CD4-positive, alpha-beta memory T cell (primary cell): ENCODE measurements at regions of chr12 and their contacts with region 1.

Region 1: DNA sequence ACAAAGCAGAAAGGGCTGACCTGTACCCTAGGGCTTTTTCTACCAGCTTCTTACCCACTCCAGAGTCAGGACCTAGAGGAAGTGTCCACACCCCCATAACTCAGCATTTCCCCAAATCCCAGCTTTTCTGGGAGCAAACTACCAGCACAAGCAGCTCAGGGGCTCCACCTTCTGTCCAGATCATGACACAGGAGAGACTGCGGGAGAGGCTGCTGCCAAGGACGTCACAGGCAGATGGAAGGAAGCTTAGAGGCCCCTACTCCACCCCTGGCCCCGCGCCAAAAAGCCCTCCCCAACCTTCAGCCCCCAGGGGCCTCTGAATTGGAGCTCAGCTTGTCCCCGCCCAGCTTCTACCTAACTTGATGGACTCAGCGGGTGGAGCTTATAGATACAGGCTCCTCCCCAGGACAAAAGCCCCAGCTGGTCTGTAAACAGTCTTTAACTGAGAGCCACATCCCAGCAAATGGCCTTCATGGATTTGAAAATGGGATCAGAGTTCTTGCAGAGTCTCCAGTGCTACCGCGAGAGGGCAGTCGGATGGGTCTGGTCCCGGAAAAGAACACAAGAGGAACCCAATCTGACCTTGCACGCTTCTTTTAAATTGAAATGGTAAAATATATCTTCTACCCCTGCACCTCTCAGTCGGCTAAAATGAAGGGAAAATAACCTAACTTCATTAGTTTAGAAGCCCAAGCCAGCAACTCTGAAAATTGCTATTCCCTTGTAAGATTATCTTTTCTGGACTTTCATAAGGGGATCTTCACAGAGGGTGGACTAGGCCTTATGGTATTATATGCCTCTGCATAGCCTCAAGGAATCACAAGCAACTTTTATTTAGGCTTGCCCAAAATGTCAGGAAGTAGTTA is 6.8 kb upstream of the BAZ2A start:
- DNase-seq: peak; percentile 93 to 99 (median 96)
- H3K4me3 ChIP-seq: peak overlapping the region; percentile 58 to 64
- H3K4me3 Mint-ChIP-seq: peak overlapping the region; percentile 86 to 99 (median 96)
- H3K27ac ChIP-seq: peak overlapping the region; percentile 81
- H3K27ac Mint-ChIP-seq: peak overlapping the region; percentile 82 to 99 (median 97)
- H3K4me1 ChIP-seq: peaks cover 44% of the 10 kb centered on the region
- H3K4me1 Mint-ChIP-seq: peaks cover 31 to 59% (median 46%) of the 10 kb centered on the region in 4 donors
- H3K27me3 ChIP-seq: no peaks in the 10 kb centered on the region
- H3K27me3 Mint-ChIP-seq: no peaks in the 10 kb centered on the region

Region 2: DNA sequence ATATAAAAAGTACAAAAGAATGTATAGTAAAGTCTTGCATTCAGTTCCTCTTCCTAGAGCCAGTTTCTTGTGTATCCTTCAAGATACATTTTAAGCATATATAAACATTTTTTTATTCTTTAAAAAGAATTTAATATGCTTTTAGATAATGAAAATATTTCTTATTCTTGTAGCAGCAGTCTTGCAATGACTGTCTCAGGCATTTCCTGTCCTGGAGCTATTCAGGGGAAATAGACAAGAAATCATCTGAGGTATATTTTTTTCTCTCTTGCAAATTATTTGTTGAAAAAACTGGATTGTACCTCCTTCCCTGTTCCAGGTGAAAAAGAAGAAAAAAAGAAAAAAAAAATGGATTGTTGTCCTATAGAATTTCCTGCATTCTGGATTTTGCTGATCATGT is 573.9 kb before region 1 on chr12:
- CTCF ChIA-PET with region 1: no interaction called
- POLR2A ChIA-PET with region 1: no interaction called
- intact Hi-C with region 1: no loop called
- DNase-seq: no peak
- H3K4me3 ChIP-seq: no peak overlapping the region
- H3K4me3 Mint-ChIP-seq: no peak overlapping the region
- H3K27ac ChIP-seq: no peak overlapping the region
- H3K27ac Mint-ChIP-seq: peak overlapping the region in 1 of 7 donors; percentile 37
- H3K4me1 ChIP-seq: no peaks in the 10 kb centered on the region
- H3K4me1 Mint-ChIP-seq: no peaks in the 10 kb centered on the region
- H3K27me3 ChIP-seq: no peaks in the 10 kb centered on the region
- H3K27me3 Mint-ChIP-seq: peaks cover 0 to 2% of the 10 kb centered on the region in 2 donors

Region 3: DNA sequence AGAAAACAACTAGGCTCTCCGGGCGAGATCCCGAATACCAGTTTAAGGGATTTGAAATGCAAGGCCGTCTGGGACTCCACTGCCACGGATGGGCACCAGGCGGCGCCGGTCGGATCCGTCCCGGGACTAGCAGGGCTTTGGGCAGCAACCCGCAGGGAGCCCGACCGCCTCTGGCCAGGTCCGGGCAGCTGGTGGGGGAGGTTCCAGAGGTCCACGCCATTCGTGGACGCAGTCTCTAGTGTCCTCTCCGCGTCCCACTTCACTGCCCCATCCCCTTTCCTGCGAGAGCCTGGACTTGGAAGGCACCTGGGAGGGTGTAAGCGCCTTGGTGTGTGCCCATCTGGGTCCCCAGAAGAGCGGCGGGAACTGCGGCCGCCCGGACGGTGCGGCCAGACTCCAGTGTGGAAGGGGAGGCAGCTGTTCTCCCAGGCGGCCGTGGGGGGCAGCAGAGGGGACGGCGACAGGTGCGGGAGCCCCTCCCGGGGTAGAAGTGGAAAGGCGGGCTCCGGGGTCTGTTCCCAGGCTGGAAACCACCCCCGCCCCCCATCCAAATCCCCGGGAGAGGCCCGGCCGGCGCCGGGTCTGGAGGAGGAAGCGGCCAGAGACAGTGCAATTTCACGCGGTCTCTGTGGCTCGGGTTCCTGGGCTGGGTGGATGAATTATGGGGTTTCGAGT is 557.8 kb before region 1 on chr12:
- CTCF ChIA-PET with region 1: no interaction called
- POLR2A ChIA-PET with region 1: no interaction called
- intact Hi-C with region 1: no loop called
- DNase-seq: peak; percentile 27 to 65 (median 40)
- H3K4me3 ChIP-seq: peak overlapping the region; percentile 52 to 86
- H3K4me3 Mint-ChIP-seq: peak overlapping the region; percentile 84 to 91 (median 88)
- H3K27ac ChIP-seq: peak overlapping the region; percentile 2
- H3K27ac Mint-ChIP-seq: peak overlapping the region in 6 of 7 donors; percentile 36 to 91 (median 72)
- H3K4me1 ChIP-seq: peaks cover 20% of the 10 kb centered on the region
- H3K4me1 Mint-ChIP-seq: peaks cover 0 to 25% (median 5%) of the 10 kb centered on the region in 4 donors
- H3K27me3 ChIP-seq: peaks cover 6% of the 10 kb centered on the region
- H3K27me3 Mint-ChIP-seq: peaks cover 0 to 3% of the 10 kb centered on the region in 2 donors

Region 4: GRCh38 chr12:56248688-56249087 is 388.2 kb before region 1 on chr12:
- CTCF ChIA-PET with region 1: no interaction called
- POLR2A ChIA-PET with region 1: no interaction called
- intact Hi-C with region 1: no loop called
- DNase-seq: no peak
- H3K4me3 ChIP-seq: no peak overlapping the region
- H3K4me3 Mint-ChIP-seq: no peak overlapping the region
- H3K27ac ChIP-seq: no peak overlapping the region
- H3K27ac Mint-ChIP-seq: no peak overlapping the region
- H3K4me1 ChIP-seq: no peaks in the 10 kb centered on the region
- H3K4me1 Mint-ChIP-seq: no peaks in the 10 kb centered on the region
- H3K27me3 ChIP-seq: no peaks in the 10 kb centered on the region
- H3K27me3 Mint-ChIP-seq: no peaks in the 10 kb centered on the region

Region 5: DNA sequence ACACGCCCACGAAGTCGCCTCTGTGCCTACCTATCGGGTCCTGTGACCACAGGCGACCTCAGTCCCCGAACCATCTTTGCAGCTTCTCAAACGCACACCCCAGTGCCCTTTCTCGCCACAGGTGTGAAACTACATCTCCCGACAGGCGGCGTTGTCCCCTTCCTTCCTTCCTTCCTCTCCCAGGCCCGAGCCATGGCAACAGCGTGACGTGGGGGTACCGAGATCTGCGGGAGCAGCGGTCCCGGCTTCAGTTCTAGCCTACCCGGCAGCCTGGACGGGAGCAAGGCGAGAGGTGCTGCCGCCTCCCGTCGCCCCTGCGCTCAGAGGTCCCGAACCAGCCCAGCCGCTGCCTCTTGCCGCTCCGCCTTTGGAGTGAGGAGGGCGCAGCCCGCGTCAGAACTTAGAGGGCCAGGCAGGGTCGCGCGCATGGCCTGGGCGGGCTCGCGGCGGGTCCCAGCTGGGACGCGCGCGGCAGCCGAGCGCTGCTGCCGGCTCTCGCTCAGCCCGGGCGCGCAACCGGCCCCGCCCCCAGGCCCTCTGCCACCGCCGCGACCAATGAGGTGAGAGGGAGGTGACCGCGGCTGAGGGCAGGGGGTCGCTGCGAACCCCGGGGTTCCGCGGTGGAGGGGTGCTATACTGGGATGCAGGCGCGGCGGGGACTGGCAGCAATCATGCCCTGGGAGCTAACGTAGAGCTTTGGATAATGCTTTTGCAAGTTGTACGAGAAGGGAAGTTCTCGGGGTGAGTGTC is 370.0 kb before region 1 on chr12 and contains the start of gene COQ10A:
- CTCF ChIA-PET with region 1: no interaction called
- POLR2A ChIA-PET with region 1: no interaction called
- intact Hi-C with region 1: no loop called
- DNase-seq: peak; percentile 89 to 96 (median 91)
- H3K4me3 ChIP-seq: peak within 1 kb of the TSS; percentile 27 to 90
- H3K4me3 Mint-ChIP-seq: peak within 1 kb of the TSS; percentile 89 to 99 (median 96)
- H3K27ac ChIP-seq: peak within 1 kb of the TSS; percentile 84
- H3K27ac Mint-ChIP-seq: peak within 1 kb of the TSS; percentile 90 to 99 (median 97)
- H3K4me1 ChIP-seq: peaks cover 14% of the 10 kb centered on the region
- H3K4me1 Mint-ChIP-seq: peaks cover 10 to 23% (median 16%) of the 10 kb centered on the region in 4 donors
- H3K27me3 ChIP-seq: no peaks in the 10 kb centered on the region
- H3K27me3 Mint-ChIP-seq: no peaks in the 10 kb centered on the region
- total RNA-seq, gene COQ10A: 35.3 to 38.6 TPM

Region 6: DNA sequence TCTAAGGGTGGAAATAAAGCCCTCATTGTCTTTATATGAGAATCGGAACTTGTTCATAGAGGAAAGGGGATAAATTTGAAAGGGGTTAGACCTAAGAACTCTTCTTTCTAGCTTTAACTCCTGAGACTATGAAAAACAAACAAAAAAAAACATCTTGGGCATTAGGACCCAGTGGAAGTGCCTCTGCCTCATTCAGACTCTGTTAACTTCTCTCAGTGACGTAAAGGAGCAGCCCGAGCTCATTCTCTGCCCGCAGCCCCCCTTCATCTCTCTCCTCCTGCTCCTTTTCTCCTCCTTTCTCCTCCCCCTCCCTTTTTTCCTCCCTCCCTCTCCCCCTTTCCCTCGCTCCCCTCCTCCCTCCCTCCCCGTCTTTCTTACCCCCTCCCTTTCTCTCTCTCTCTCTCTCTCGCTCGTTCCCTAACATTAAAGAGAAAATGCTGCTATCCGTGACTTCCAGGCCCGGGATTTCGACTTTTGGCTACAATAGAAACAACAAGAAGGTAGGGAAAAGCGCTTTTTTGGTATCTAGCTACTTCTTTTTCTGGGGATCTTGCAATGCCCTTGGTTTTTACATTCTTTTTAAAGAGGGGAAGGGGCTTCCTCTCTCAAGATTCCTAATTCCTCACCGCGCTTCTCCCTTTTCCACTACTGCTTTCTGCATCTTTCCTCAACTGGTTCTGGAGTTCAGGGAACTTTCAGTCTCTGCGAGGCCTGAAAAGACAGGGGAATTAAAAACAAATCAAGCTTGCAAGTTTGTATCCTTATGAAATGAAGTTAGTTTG is 115.1 kb before region 1 on chr12 and contains the start of gene RBMS2:
- CTCF ChIA-PET with region 1: interaction called, 17 read pairs
- POLR2A ChIA-PET with region 1: interaction called, 4 read pairs
- intact Hi-C with region 1: no loop called
- DNase-seq: peak; percentile 37 to 69 (median 49)
- H3K4me3 ChIP-seq: peak within 1 kb of the TSS in 1 of 2 donors; percentile 9
- H3K4me3 Mint-ChIP-seq: peak within 1 kb of the TSS; percentile 87 to 95 (median 89)
- H3K27ac ChIP-seq: peak within 1 kb of the TSS; percentile 18
- H3K27ac Mint-ChIP-seq: peak within 1 kb of the TSS; percentile 78 to 95 (median 90)
- H3K4me1 ChIP-seq: peaks cover 14% of the 10 kb centered on the region
- H3K4me1 Mint-ChIP-seq: peaks cover 14 to 28% (median 22%) of the 10 kb centered on the region in 4 donors
- H3K27me3 ChIP-seq: no peaks in the 10 kb centered on the region
- H3K27me3 Mint-ChIP-seq: peaks cover 0 to 3% of the 10 kb centered on the region in 2 donors
- total RNA-seq, gene RBMS2: 1.9 to 2.0 TPM

Region 7: DNA sequence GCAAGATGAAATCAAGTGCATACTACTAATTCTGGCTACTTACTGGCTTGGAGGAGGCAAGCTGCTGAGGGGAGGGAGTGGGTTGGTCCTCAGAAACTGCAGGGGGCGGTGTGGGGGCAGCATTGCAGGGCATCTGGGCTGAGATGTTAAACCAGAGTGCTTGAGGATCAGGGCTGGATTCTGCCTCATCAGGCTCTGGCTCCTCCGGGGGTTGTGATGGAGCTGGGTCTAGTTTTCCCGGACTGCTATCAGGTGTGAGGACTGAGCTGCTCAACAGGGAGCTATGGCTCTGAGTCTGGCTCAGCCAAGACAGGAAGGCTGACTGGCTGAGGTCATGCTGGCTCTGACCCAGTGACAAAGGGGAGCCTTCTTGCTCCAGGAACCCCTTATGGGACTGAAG is 35.4 kb before region 1 on chr12:
- CTCF ChIA-PET with region 1: interaction called, 38 read pairs
- POLR2A ChIA-PET with region 1: interaction called, 6 read pairs
- intact Hi-C with region 1: loop called (anchors 1 kb)
- DNase-seq: peak in 2 of 5 donors; percentile 16 to 24
- H3K4me3 ChIP-seq: no peak overlapping the region
- H3K4me3 Mint-ChIP-seq: no peak overlapping the region
- H3K27ac ChIP-seq: no peak overlapping the region
- H3K27ac Mint-ChIP-seq: peak overlapping the region in 1 of 7 donors; percentile 62
- H3K4me1 ChIP-seq: no peaks in the 10 kb centered on the region
- H3K4me1 Mint-ChIP-seq: no peaks in the 10 kb centered on the region
- H3K27me3 ChIP-seq: no peaks in the 10 kb centered on the region
- H3K27me3 Mint-ChIP-seq: no peaks in the 10 kb centered on the region

Region 8: GRCh38 chr12:56670836-56671235 is 33.9 kb after region 1 on chr12:
- CTCF ChIA-PET with region 1: interaction called, 11 read pairs
- POLR2A ChIA-PET with region 1: interaction called, 18 read pairs
- intact Hi-C with region 1: no loop called
- DNase-seq: no peak
- H3K4me3 ChIP-seq: no peak overlapping the region
- H3K4me3 Mint-ChIP-seq: no peak overlapping the region
- H3K27ac ChIP-seq: no peak overlapping the region
- H3K27ac Mint-ChIP-seq: peak overlapping the region in 1 of 7 donors; percentile 41
- H3K4me1 ChIP-seq: peaks cover 46% of the 10 kb centered on the region
- H3K4me1 Mint-ChIP-seq: peaks cover 18 to 52% (median 36%) of the 10 kb centered on the region in 4 donors
- H3K27me3 ChIP-seq: no peaks in the 10 kb centered on the region
- H3K27me3 Mint-ChIP-seq: no peaks in the 10 kb centered on the region

Region 9: GRCh38 chr12:56688129-56688845 is 51.4 kb after region 1 on chr12 and contains the start of gene PTGES3:
- CTCF ChIA-PET with region 1: interaction called, 40 read pairs
- POLR2A ChIA-PET with region 1: interaction called, 210 read pairs
- intact Hi-C with region 1: loop called (anchors 2 kb)
- DNase-seq: peak; percentile 97 to 98 (median 98)
- H3K4me3 ChIP-seq: peak within 1 kb of the TSS; percentile 83 to 99
- H3K4me3 Mint-ChIP-seq: peak within 1 kb of the TSS; percentile 99 to 100 (median 100)
- H3K27ac ChIP-seq: peak within 1 kb of the TSS; percentile 99
- H3K27ac Mint-ChIP-seq: peak within 1 kb of the TSS; percentile 96 to 100 (median 100)
- H3K4me1 ChIP-seq: peaks cover 36% of the 10 kb centered on the region
- H3K4me1 Mint-ChIP-seq: peaks cover 16 to 51% (median 25%) of the 10 kb centered on the region in 4 donors
- H3K27me3 ChIP-seq: no peaks in the 10 kb centered on the region
- H3K27me3 Mint-ChIP-seq: no peaks in the 10 kb centered on the region
- total RNA-seq, gene PTGES3: 191 to 195 TPM

Region 10: GRCh38 chr12:56751712-56752598 is 115.0 kb after region 1 on chr12 and contains the start of gene PRIM1:
- CTCF ChIA-PET with region 1: no interaction called
- POLR2A ChIA-PET with region 1: interaction called, 5 read pairs
- intact Hi-C with region 1: loop called (anchors 2 kb)
- DNase-seq: peak; percentile 80 to 83 (median 82)
- H3K4me3 ChIP-seq: peak within 1 kb of the TSS; percentile 80 to 92
- H3K4me3 Mint-ChIP-seq: peak within 1 kb of the TSS; percentile 96 to 99 (median 98)
- H3K27ac ChIP-seq: peak within 1 kb of the TSS; percentile 82
- H3K27ac Mint-ChIP-seq: peak within 1 kb of the TSS; percentile 94 to 98 (median 96)
- H3K4me1 ChIP-seq: peaks cover 10% of the 10 kb centered on the region
- H3K4me1 Mint-ChIP-seq: peaks cover 20 to 43% (median 28%) of the 10 kb centered on the region in 4 donors
- H3K27me3 ChIP-seq: no peaks in the 10 kb centered on the region
- H3K27me3 Mint-ChIP-seq: no peaks in the 10 kb centered on the region
- total RNA-seq, gene PRIM1: 30.2 to 34.3 TPM

Region 11: DNA sequence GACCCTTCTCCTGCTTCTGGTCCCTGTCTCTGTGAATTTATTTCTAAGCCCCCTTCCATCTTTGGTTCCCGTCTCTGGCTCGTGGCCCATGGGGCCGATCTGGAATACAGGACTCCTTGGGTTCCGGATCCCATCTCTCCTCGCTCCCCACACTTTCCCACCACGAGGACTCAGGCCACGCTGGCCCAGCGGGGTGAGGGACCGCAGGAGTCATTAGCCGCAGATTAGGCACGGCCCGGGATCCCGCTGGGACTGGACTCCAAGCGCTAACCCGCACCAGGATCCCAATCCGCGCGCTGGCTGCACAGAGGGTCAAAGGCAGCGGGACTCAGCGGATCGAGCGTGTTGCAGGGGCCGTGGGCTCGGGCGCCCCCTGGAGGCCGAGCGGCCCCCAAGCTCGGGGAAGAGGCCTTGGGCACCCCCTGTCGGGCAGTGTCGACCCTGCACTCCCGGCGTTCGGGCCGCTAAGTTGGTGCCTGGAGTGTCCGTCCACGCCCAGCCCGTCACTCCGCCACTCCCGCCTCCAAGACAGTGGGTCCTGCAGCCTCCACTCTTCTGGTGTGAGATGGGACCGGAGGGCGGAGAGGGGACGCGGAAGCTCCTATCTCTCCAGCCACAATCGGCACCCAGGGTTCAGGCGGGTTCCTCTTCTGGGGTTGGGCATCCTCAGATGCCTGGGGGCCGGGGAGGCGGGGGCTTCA is 602.1 kb after region 1 on chr12:
- CTCF ChIA-PET with region 1: no interaction called
- POLR2A ChIA-PET with region 1: no interaction called
- intact Hi-C with region 1: loop called (anchors 10 kb)
- DNase-seq: peak; percentile 80 to 87 (median 82)
- H3K4me3 ChIP-seq: peak overlapping the region; percentile 42 to 79
- H3K4me3 Mint-ChIP-seq: peak overlapping the region; percentile 90 to 98 (median 94)
- H3K27ac ChIP-seq: no peak overlapping the region
- H3K27ac Mint-ChIP-seq: peak overlapping the region in 6 of 7 donors; percentile 7 to 85 (median 62)
- H3K4me1 ChIP-seq: peaks cover 87% of the 10 kb centered on the region
- H3K4me1 Mint-ChIP-seq: peaks cover 41 to 88% (median 60%) of the 10 kb centered on the region in 4 donors
- H3K27me3 ChIP-seq: peaks cover 43% of the 10 kb centered on the region
- H3K27me3 Mint-ChIP-seq: peaks cover 32 to 52% of the 10 kb centered on the region in 2 donors